GM10248 (cell line): ENCODE measurements at regions of chr20 and their contacts with region 1.

Region 1: GRCh38 chr20:38221119-38221589 is 39.4 kb downstream of the KIAA1755 start:
- DNase-seq: peak; percentile 88
- CTCF ChIP-seq: peak; percentile 91

Region 2: GRCh38 chr20:37564388-37565133 is 656.6 kb before region 1 on chr20:
- CTCF ChIA-PET with region 1: interaction called, 43 read pairs
- POLR2A ChIA-PET with region 1: no interaction called
- DNase-seq: peak; percentile 83
- CTCF ChIP-seq: peak; percentile 96

Region 3: DNA sequence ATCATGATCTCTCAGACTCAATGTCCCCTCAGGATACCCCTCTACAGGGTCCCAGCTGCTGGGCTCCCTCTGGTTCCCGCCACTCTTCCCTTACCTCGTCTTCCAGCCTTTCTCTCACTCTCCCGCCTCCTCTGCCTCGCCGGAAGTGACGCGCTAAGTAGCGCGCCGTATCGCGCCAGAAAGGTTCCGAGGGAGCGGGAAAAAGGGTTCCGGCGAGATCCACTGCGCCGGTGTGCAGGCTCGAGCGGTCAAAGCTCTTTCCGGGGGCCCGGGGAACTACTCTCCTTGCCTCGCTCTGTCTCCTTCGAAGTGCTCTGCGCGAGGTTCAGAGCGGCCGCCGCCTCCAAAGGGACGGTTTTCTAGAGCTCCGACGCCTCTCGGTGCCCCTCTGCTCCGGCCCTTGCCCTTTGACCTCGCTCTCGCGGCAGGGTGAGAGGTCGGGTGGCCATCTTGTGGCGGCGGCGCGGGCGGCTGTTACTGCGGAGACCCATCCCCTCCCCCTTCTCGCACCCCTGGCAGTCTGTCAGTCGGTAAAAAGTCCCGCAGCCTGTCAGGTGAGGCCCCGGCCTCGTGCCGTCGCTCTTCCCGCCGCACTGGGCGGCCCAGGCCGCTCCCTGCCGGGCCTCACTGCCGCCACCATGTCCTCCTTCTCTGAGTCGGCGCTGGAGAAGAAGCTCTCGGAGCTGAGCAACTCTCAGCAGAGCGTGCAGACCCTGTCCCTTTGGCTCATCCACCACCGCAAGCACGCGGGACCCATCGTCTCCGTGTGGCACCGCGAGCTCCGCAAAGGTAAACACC is 187.6 kb before region 1 on chr20 and contains the starts of genes RPRD1B and TTI1:
- CTCF ChIA-PET with region 1: interaction called, 11 read pairs
- POLR2A ChIA-PET with region 1: no interaction called
- DNase-seq: peak; percentile 88
- CTCF ChIP-seq: no peak

Region 4: DNA sequence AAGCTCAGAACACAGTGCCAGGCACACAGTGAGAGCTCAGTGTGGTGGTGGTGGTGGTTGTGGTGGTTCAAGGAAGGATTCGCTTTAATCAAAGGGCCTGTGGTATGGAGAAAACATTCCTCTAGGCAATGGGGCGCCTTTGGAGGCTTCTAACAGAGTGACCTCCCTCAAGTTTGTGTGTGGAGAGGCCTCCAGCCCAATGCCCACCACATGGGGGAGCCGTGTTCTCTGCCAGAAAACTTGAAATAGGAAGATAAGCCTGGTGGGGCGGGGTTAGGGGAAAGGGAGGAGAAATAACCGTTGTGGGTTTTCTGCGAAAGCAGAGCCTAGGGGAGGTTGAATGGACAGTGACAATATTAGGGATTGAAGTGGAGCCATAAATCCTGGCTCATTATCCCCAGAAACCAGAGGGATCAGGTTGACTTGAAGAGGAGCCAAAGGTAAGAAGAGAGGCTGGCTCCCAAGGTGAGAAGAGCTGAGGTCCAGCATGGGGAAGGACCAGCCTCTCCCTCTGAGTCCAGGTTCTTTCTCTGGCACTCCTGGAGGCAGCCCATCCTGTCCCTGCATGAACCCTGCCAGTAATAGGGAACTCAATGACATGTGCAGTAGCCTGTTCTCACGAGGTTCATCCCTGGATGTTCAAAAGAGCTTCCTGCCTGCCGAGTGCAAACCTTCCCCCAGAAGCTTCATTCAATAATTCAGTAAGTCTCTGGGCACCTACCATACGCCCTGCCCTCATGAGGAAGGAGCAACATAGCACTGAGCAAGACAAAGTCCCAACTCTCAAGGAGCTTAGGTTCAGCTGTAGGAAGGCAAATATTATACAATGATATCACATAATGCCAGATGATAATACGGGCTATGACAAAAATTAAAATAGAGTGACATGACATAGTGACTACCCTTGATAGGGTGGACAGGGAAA is 107.5 kb before region 1 on chr20:
- CTCF ChIA-PET with region 1: interaction called, 16 read pairs
- POLR2A ChIA-PET with region 1: no interaction called
- DNase-seq: no peak
- CTCF ChIP-seq: no peak

Region 5: DNA sequence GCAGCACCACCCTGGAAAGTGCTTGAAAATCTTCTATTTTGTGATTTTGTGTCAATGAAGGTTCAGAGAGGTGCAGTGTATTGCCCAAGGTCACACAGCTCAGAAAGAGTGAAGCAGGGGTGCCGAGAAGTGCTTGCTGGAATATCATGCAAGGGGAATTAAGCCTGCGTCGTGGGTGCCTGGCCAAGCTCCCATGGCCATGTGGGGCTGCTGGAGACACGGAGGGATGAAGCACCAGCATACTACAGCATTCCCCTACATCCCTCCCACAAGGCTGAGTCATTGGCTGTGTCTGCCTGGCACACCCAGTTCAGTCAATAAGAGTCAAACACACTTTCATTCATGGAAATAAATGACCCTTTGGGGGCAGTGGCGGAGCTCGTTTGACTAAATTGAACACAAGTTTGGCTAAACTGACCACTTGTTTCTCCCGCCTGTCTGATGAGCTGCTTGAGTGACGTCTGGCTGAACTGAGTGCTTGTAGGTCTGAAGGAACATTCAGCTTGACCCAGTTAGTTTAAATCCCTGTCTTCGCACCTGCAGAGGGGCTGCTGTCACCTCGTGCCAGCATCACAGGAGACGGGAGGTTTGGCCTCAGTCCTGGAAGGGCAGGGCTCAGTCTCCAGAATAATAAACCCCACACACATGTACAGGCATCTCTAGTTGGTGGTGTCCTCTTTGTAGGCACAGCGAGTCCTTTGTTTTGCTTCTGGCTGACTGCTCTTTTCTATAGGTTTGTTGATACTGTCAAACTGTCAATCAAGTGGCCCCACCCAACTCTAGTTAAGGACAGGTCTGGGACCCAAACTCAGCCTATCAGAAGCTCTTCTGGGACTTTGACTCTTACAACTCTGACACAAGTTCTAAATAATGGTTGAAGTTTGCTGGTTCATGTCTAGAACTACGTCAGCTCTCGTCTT is 47.7 kb before region 1 on chr20:
- CTCF ChIA-PET with region 1: interaction called, 26 read pairs
- POLR2A ChIA-PET with region 1: no interaction called
- DNase-seq: no peak
- CTCF ChIP-seq: no peak

Region 6: GRCh38 chr20:38196592-38196991 is 24.6 kb before region 1 on chr20:
- CTCF ChIA-PET with region 1: interaction called, 70 read pairs
- POLR2A ChIA-PET with region 1: no interaction called
- DNase-seq: no peak
- CTCF ChIP-seq: no peak